Dorsolateral prefrontal cortex (tissue), 120 donors: ENCODE measurements at regions of chr2 and their contacts with region 1.

Region 1: GRCh38 chr2:223944703-223945531 is at the start of gene WDFY1:
- DNase-seq: peak; percentile 81 to 96 (median 92)
- H3K4me3 ChIP-seq: peak within 1 kb of the TSS; percentile 51 to 100 (median 95)
- H3K27ac ChIP-seq: peak within 1 kb of the TSS; percentile 32 to 96 (median 90)
- H3K27me3 ChIP-seq: no peaks in the 10 kb centered on the region
- CTCF ChIP-seq: peak in 47 of 56 donors; percentile 6 to 56 (median 32)
- total RNA-seq, gene WDFY1: 24.8 to 56.2 (median 37.5) TPM

Region 2: DNA sequence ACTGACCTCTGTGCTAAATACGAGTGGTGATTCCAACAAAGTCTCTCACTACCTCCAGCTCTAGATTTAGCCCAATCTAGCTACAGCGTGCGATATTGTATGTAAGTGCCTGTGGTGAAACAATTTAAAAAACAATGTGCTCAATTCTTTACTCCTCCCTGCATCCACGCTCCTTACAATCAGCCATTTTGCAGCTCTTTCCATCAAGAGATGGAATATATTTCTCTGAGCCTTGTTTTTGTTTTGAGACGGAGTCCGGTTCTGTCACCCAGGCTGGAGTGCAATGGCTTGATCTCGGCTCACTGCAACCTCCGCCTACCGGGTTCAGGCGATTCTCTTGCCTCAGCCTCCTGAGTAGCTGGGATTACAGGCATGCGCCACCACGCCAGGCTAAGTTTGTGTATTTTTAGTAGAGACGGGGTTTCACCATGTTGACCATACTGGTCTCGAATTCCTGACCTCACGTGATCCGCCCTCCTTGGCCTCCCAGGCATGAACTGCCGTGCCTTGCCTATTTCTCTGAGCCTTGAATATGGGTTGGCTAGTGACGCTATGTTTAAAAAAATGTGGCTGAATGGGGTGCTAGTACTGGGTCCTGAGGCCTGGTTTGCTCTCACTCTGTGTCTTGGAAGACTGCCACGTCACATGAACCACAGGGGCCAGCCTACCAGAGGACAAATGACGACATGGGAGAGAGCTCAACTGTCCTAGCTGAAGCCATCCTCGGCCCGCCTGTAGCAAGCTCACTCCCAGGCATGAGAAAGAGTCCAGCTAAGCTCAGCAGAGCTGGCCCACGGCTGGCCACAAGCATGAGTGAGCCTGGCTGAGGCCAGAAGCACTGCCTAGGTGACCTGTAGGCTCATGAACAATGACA is 14.6 kb before region 1 on chr2:
- intact Hi-C with region 1: loop called in 1 of 2 experiments (anchors 2 kb)
- DNase-seq: peak; percentile 28 to 90 (median 80)
- H3K4me3 ChIP-seq: peak overlapping the region in 18 of 59 donors; percentile 0 to 40 (median 19)
- H3K27ac ChIP-seq: peak overlapping the region in 58 of 59 donors; percentile 27 to 95 (median 82)
- H3K27me3 ChIP-seq: no peaks in the 10 kb centered on the region
- CTCF ChIP-seq: peak in 5 of 56 donors; percentile 7 to 34 (median 20)

Region 3: DNA sequence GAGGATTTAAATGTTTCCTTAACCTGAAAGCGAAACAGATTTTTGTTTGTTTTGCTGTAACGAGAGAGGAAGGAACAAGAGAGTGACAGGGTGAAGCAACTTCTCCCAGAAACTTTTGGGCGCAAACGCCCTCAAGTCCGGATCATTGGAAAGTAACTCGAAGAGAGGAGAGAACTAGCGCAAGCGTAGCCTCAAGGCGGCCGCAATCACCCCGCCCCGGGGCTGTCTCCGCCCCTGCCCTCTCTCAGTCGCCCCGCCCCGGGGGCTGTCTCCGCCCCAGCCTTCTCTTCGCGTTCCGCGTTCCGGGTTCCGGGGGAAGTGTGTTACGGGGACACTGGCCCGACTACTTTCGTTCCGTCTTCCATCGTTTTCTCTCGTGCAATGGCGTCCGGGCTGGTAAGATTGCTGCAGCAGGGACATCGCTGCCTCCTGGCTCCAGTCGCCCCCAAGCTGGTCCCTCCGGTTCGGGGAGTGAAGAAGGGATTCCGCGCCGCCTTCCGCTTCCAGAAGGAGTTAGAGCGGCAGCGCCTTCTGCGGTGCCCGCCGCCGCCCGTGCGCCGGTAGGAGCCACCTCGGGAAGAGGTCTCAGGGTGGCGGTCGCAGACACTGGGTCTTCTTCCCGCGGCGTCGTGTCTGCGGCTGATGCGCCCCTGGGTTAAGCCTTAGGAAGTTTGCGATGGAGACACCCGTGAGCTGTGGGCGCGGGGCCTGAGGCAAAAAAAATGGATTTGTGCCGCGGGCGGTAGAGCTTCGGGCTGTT is 12.4 kb after region 1 on chr2 and contains the start of gene MRPL44:
- intact Hi-C with region 1: loop called in 1 of 2 experiments (anchors 1 kb)
- DNase-seq: peak; percentile 95 to 99 (median 98)
- H3K4me3 ChIP-seq: peak within 1 kb of the TSS; percentile 65 to 100 (median 92)
- H3K27ac ChIP-seq: peak within 1 kb of the TSS in 58 of 59 donors; percentile 48 to 96 (median 86)
- H3K27me3 ChIP-seq: no peaks in the 10 kb centered on the region
- CTCF ChIP-seq: peak in 49 of 56 donors; percentile 4 to 69 (median 40)
- total RNA-seq, gene MRPL44: 12.3 to 28.1 (median 20.4) TPM

Region 4: DNA sequence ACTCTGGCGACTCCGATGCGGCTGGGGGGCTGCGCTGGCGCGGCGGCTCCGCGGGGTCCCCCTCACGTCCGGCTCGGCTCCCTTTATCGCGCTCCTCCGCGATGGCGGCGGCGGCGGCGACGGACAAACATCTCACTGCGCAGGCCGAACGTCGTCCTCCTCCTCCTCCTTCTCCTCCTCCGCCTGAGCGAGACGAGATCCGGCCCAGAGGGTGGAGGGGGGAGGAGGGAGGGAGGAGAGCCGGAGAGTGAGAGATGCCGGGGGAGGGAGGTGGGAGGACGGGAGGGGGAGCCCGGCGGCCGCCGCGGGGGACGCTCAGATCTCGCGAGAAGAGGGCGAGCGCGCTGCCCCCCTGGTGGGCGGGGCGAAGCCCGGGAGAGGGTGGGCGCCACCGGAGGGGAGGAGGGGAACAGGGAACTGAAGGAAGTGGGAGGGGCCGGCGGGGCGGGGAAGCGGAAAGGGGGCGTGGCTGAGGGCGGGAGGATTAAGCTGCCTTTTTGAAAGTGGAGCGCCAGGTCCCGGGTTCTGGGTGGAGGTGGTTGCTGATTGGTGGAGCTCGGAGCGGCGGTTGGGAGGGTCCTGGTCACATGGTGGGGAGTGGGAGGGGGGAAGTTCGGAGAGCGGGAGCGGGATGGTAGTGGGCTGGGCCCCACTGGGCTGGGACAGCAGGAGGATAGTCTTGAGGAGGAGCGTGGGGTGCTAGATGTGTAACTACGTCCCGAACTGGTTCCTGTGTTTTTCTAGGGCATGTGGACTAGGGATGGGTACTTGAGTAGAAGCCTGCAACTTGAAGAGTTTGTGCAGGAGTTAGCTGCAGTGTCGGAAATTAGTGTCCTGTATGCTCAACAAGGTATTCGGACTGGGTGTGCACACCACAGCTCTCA is 640.5 kb after region 1 on chr2 and contains the start of gene CUL3:
- intact Hi-C with region 1: loop called in 1 of 2 experiments (anchors 10 kb)
- DNase-seq: peak; percentile 97 to 99 (median 98)
- H3K4me3 ChIP-seq: peak within 1 kb of the TSS; percentile 55 to 92 (median 80)
- H3K27ac ChIP-seq: peak within 1 kb of the TSS in 57 of 59 donors; percentile 26 to 96 (median 84)
- H3K27me3 ChIP-seq: no peaks in the 10 kb centered on the region
- CTCF ChIP-seq: peak in 12 of 56 donors; percentile 1 to 34 (median 13)
- total RNA-seq, gene CUL3: 48.5 to 114 (median 84.5) TPM